Endothelial cell of umbilical vein (primary cell): ENCODE measurements at regions of chr15 and their contacts with region 1.

Region 1: GRCh38 chr15:39680868-39681267 is 100.0 kb downstream of the THBS1 start:
- DNase-seq: no peak
- H3K4me3 ChIP-seq: no peak overlapping the region
- H3K27ac ChIP-seq: no peak overlapping the region
- H3K4me1 ChIP-seq: no peaks in the 10 kb centered on the region
- H3K27me3 ChIP-seq: no peaks in the 10 kb centered on the region
- CTCF ChIP-seq: no peak
- POLR2A ChIP-seq: no peak

Region 2: GRCh38 chr15:39666677-39667076 is 14.2 kb before region 1 on chr15:
- CTCF ChIA-PET with region 1: interaction called, 10 read pairs
- POLR2A ChIA-PET with region 1: no interaction called
- dilution Hi-C with region 1: no loop called
- intact Hi-C with region 1: no loop called
- DNase-seq: peak; percentile 53
- H3K4me3 ChIP-seq: no peak overlapping the region
- H3K27ac ChIP-seq: peak overlapping the region; percentile 2
- H3K4me1 ChIP-seq: peaks cover 17% of the 10 kb centered on the region
- H3K27me3 ChIP-seq: no peaks in the 10 kb centered on the region
- CTCF ChIP-seq: no peak
- POLR2A ChIP-seq: no peak